WTC11 (cell line): ENCODE measurements at regions of chr12 and their contacts with region 1.

Region 1: GRCh38 chr12:103571286-103571685 is 15.8 kb upstream of the STAB2 start:
- DNase-seq: peak; percentile 73
- ATAC-seq: peak; percentile 90
- H3K4me3 Mint-ChIP-seq: peak overlapping the region; percentile 36
- H3K27ac Mint-ChIP-seq: no peak overlapping the region
- H3K4me1 Mint-ChIP-seq: peaks cover 25% of the 10 kb centered on the region
- H3K27me3 Mint-ChIP-seq: peaks cover 6% of the 10 kb centered on the region; the same call in 1 of the 2 replicates
- CTCF ChIP-seq: no peak

Region 2: DNA sequence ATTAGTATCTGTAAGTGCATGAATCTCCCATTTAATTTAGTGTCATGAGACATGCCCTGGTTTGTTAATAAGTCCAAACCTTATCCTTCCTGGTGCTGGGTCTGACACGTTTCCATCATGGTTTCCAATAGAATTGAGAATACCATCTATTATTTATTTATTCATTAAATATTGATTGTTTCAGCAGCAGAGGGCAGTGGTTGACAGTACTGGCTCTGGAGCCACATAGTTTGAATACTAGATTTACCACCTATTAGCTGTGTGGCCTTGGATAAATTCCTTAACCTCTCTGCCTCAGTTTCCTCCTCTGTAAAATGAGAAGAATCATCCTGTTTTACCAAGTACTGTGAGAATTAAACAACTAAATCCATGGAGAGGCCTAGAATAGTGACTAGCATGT is 14.8 kb after region 1 on chr12:
- CTCF ChIA-PET with region 1: interaction called, 21 read pairs
- POLR2A ChIA-PET with region 1: no interaction called
- DNase-seq: no peak
- ATAC-seq: no peak
- H3K4me3 Mint-ChIP-seq: no peak overlapping the region
- H3K27ac Mint-ChIP-seq: no peak overlapping the region
- H3K4me1 Mint-ChIP-seq: no peaks in the 10 kb centered on the region
- H3K27me3 Mint-ChIP-seq: no peaks in the 10 kb centered on the region; the same call in 1 of the 2 replicates
- CTCF ChIP-seq: no peak

Region 3: GRCh38 chr12:103745962-103746361 is 174.7 kb after region 1 on chr12:
- CTCF ChIA-PET with region 1: interaction called, 11 read pairs
- POLR2A ChIA-PET with region 1: no interaction called
- DNase-seq: peak; percentile 45
- ATAC-seq: peak; percentile 99
- H3K4me3 Mint-ChIP-seq: no peak overlapping the region
- H3K27ac Mint-ChIP-seq: no peak overlapping the region
- H3K4me1 Mint-ChIP-seq: peaks cover 10% of the 10 kb centered on the region
- H3K27me3 Mint-ChIP-seq: no peaks in the 10 kb centered on the region
- CTCF ChIP-seq: no peak

Region 4: GRCh38 chr12:103858953-103859601 is 287.8 kb after region 1 on chr12:
- CTCF ChIA-PET with region 1: no interaction called
- POLR2A ChIA-PET with region 1: no interaction called
- DNase-seq: no peak
- ATAC-seq: no peak
- H3K4me3 Mint-ChIP-seq: no peak overlapping the region
- H3K27ac Mint-ChIP-seq: no peak overlapping the region
- H3K4me1 Mint-ChIP-seq: no peaks in the 10 kb centered on the region
- H3K27me3 Mint-ChIP-seq: no peaks in the 10 kb centered on the region; the same call in 1 of the 2 replicates
- CTCF ChIP-seq: no peak

Region 5: GRCh38 chr12:104197264-104197663 is 626.0 kb after region 1 on chr12:
- CTCF ChIA-PET with region 1: no interaction called
- POLR2A ChIA-PET with region 1: no interaction called
- DNase-seq: no peak
- ATAC-seq: no peak
- H3K4me3 Mint-ChIP-seq: no peak overlapping the region
- H3K27ac Mint-ChIP-seq: no peak overlapping the region
- H3K4me1 Mint-ChIP-seq: no peaks in the 10 kb centered on the region
- H3K27me3 Mint-ChIP-seq: no peaks in the 10 kb centered on the region; the same call in 1 of the 2 replicates
- CTCF ChIP-seq: no peak